ENCODE measurements at regions of chr14 and their contacts with region 1.

Region 1: DNA sequence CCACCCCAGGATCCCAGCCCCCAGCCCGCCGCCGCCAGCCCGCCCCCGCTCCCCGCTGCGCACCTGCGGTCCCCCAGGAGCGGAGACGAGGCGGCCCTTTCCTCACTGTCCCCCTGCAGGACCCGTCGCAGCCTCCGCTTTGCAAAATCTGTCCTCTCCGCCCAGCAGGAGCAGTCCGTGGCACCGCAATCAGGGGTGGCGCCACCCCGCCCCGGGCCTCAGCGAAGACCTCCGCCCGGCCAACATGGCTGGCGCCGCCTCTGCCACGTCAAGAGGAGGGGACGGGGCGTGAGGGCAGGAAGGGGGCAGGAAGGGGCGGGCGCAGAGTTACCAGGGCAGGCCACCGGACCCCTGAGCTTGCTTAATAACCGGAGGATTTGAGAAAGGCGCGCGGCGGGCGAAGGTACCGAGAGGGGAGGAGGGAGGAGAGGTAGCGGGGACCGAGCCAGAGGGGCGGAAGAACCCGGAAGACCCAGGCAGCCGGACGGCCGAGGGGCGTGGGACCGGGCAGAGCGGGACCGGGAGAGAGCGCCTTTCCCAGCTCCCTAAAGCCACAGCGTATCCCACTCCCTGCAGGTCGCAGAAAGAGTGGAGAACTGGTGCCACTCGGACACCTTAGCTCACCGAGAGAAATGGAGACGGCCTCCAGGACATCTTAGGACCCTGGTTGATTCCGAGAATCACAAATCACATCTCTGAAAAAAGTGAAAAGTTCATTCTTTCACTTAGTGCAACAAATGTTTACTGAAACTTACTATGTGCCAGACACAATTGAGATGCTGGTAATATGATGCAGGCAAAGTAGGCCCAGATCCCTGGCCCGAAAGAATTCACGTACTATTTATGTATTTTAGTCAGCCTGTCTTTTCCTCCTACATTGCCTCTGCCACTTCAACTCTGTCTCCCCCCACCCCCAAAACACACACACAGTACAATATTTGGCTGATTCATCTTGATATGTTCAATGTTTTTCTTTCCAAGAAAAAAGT is at the start of gene SEC23A:
- DNase-seq: peak; percentile 94 to 97
- H3K4me3 ChIP-seq: peak within 1 kb of the TSS; percentile 76
- H3K4me3 Mint-ChIP-seq: peak within 1 kb of the TSS; percentile 87
- H3K27ac Mint-ChIP-seq: peak within 1 kb of the TSS; percentile 93
- H3K4me1 ChIP-seq: peaks cover 24% of the 10 kb centered on the region
- H3K4me1 Mint-ChIP-seq: peaks cover 7% of the 10 kb centered on the region
- H3K27me3 ChIP-seq: no peaks in the 10 kb centered on the region
- H3K27me3 Mint-ChIP-seq: no peaks in the 10 kb centered on the region
- CTCF ChIP-seq: no peak
- total RNA-seq, gene SEC23A: 90.2 and 108 TPM in 2 replicates

Region 2: DNA sequence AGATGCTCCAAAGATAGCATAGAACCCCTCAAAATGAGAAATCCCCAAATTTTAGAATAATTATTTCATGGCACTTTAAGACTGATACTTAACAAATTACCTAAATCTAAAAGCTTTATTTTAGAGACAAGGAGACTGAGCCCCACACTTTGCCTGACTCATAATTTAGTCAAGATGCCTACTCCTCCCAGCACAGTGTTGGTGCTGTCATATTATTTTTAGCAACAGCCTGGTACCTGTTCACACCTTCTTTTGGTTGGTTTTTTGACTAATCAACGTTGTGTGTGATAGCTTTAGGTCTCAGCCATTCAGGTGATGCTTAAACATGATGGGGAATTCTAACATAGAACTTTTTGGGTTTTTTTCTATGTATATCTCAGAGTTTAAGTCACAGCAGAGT is 120.4 kb before region 1 on chr14:
- CTCF ChIA-PET with region 1: no interaction called
- POLR2A ChIA-PET with region 1: no interaction called
- intact Hi-C with region 1: no loop called
- DNase-seq: no peak
- H3K4me3 ChIP-seq: no peak overlapping the region
- H3K4me3 Mint-ChIP-seq: no peak overlapping the region
- H3K27ac Mint-ChIP-seq: no peak overlapping the region
- H3K4me1 ChIP-seq: no peaks in the 10 kb centered on the region
- H3K4me1 Mint-ChIP-seq: no peaks in the 10 kb centered on the region
- H3K27me3 ChIP-seq: no peaks in the 10 kb centered on the region
- H3K27me3 Mint-ChIP-seq: no peaks in the 10 kb centered on the region
- CTCF ChIP-seq: no peak

Region 3: DNA sequence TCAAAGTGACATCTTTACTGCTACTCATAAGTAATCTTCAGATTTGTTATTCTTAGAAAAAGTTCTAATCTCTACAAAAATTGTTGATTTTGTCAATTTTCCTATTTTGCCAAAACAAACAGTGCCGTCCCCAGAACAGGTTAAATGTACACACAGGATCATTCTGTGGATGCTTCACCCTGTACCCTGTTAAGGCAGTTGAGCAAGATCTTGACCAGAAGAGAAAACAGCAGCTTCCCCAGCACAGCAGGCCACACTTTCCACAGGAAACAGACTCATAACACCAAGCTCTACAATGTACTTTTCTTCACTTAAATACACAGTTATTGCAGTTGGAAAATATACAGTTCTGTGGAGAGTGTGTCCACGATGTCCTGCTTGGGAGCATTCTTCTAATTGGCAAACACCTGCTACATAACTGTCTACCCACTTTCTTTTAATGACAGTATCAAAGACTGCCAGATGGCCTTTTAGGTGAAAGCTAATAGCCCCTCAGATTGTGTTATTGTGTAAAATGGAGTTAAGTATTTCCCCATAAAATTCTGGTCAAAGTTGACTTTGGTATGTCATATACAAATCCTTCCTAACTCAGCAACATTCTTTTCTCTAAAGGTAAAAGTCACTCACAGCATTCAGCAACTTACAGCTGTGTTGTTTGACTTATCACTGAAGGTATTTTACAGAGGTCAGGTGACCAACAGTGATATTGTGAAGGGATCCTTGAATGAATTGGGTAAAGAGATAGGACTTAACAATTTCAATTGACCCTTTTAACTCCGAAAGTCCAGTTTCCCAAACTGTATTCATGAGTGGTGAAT is 77.2 kb before region 1 on chr14:
- CTCF ChIA-PET with region 1: interaction called, 4 read pairs
- POLR2A ChIA-PET with region 1: interaction called, 18 read pairs
- intact Hi-C with region 1: loop called (anchors 2 kb)
- DNase-seq: peak; percentile 53 to 59
- H3K4me3 ChIP-seq: no peak overlapping the region
- H3K4me3 Mint-ChIP-seq: peak overlapping the region; percentile 48
- H3K27ac Mint-ChIP-seq: peak overlapping the region; percentile 79
- H3K4me1 ChIP-seq: peaks cover 38% of the 10 kb centered on the region
- H3K4me1 Mint-ChIP-seq: peaks cover 51% of the 10 kb centered on the region
- H3K27me3 ChIP-seq: no peaks in the 10 kb centered on the region
- H3K27me3 Mint-ChIP-seq: no peaks in the 10 kb centered on the region
- CTCF ChIP-seq: no peak

Region 4: GRCh38 chr14:39083127-39083526 is 20.1 kb before region 1 on chr14:
- CTCF ChIA-PET with region 1: no interaction called
- POLR2A ChIA-PET with region 1: no interaction called
- intact Hi-C with region 1: no loop called
- DNase-seq: no peak
- H3K4me3 ChIP-seq: no peak overlapping the region
- H3K4me3 Mint-ChIP-seq: no peak overlapping the region
- H3K27ac Mint-ChIP-seq: no peak overlapping the region
- H3K4me1 ChIP-seq: no peaks in the 10 kb centered on the region
- H3K4me1 Mint-ChIP-seq: no peaks in the 10 kb centered on the region
- H3K27me3 ChIP-seq: no peaks in the 10 kb centered on the region
- H3K27me3 Mint-ChIP-seq: no peaks in the 10 kb centered on the region
- CTCF ChIP-seq: no peak

Region 5: GRCh38 chr14:39122330-39123138 is 19.3 kb after region 1 on chr14:
- CTCF ChIA-PET with region 1: no interaction called
- POLR2A ChIA-PET with region 1: interaction called, 11 read pairs
- intact Hi-C with region 1: no loop called
- DNase-seq: no peak
- H3K4me3 ChIP-seq: no peak overlapping the region
- H3K4me3 Mint-ChIP-seq: no peak overlapping the region
- H3K27ac Mint-ChIP-seq: no peak overlapping the region
- H3K4me1 ChIP-seq: no peaks in the 10 kb centered on the region
- H3K4me1 Mint-ChIP-seq: no peaks in the 10 kb centered on the region
- H3K27me3 ChIP-seq: no peaks in the 10 kb centered on the region
- H3K27me3 Mint-ChIP-seq: no peaks in the 10 kb centered on the region
- CTCF ChIP-seq: no peak

Region 6: DNA sequence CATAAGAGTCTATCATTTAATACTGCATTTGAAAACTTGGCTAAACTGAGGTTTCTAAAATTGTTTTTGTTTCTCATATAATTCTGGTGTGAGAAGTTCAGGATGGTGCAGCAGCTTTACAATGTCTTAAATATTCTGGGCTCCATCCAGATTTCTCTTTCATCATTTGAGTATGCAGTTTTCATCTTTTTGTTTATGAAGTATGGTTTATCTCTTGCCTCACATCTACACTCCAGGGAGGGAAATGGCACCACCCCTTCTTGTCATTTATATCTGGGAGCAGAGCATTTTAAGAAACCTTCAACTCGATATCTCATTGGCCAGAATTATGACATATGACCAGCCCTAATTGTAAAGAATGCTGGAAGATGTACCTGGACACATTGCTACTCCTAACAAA is 35.2 kb after region 1 on chr14:
- CTCF ChIA-PET with region 1: no interaction called
- POLR2A ChIA-PET with region 1: no interaction called
- intact Hi-C with region 1: no loop called
- DNase-seq: no peak
- H3K4me3 ChIP-seq: no peak overlapping the region
- H3K4me3 Mint-ChIP-seq: no peak overlapping the region
- H3K27ac Mint-ChIP-seq: no peak overlapping the region
- H3K4me1 ChIP-seq: no peaks in the 10 kb centered on the region
- H3K4me1 Mint-ChIP-seq: no peaks in the 10 kb centered on the region
- H3K27me3 ChIP-seq: no peaks in the 10 kb centered on the region
- H3K27me3 Mint-ChIP-seq: no peaks in the 10 kb centered on the region
- CTCF ChIP-seq: no peak

Region 7: DNA sequence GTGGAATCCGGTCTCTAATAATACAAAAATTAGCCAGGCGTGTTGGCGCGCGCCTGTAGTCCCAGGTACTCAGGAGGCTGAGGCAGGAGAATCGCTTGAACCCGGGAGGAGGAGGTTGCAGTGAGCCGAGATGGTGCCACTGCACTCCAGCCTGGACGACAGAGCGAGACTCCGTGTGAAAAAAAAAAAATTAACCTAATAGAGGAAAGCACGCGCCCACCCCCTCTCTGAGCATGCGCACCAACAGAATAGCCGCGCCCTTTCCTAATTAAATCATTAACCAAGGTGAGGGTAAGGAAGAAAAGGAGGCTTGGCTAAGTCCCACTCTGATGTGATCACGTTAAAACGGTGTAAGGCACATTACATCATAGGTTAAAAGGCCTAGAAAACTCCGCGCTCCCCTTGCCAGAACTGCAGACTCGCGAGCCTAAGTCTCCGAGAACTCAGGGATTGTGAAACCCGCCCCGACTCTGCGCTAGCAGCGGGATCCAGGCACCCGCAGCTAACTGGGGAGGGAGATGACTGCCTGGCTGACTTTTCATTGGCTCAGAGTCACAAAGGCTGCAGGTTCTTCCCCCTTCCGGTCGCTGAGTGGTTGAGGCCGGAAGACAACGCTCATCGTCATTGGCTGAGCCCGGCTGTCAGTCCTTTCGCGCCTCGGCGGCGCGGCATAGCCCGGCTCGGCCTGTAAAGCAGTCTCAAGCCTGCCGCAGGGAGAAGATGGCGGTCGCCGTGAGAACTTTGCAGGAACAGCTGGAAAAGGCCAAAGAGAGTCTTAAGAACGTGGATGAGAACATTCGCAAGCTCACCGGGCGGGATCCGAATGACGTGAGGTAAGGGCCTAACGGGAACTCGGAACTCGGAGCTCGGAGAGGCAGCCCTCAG is 71.5 kb after region 1 on chr14 and contains the start of gene PNN:
- CTCF ChIA-PET with region 1: interaction called, 9 read pairs
- POLR2A ChIA-PET with region 1: interaction called, 34 read pairs
- intact Hi-C with region 1: loop called (anchors 1 kb)
- DNase-seq: peak; percentile 98 to 99
- H3K4me3 ChIP-seq: peak within 1 kb of the TSS; percentile 58
- H3K4me3 Mint-ChIP-seq: peak within 1 kb of the TSS; percentile 92
- H3K27ac Mint-ChIP-seq: peak within 1 kb of the TSS; percentile 98
- H3K4me1 ChIP-seq: 0 out of 2 replicates have a peak, but pooled peaks cover 8% of the 10 kb centered on the region
- H3K4me1 Mint-ChIP-seq: peaks cover 7% of the 10 kb centered on the region
- H3K27me3 ChIP-seq: no peaks in the 10 kb centered on the region
- H3K27me3 Mint-ChIP-seq: no peaks in the 10 kb centered on the region
- CTCF ChIP-seq: no peak
- total RNA-seq, gene PNN: 98.5 and 100 TPM in 2 replicates

Region 8: DNA sequence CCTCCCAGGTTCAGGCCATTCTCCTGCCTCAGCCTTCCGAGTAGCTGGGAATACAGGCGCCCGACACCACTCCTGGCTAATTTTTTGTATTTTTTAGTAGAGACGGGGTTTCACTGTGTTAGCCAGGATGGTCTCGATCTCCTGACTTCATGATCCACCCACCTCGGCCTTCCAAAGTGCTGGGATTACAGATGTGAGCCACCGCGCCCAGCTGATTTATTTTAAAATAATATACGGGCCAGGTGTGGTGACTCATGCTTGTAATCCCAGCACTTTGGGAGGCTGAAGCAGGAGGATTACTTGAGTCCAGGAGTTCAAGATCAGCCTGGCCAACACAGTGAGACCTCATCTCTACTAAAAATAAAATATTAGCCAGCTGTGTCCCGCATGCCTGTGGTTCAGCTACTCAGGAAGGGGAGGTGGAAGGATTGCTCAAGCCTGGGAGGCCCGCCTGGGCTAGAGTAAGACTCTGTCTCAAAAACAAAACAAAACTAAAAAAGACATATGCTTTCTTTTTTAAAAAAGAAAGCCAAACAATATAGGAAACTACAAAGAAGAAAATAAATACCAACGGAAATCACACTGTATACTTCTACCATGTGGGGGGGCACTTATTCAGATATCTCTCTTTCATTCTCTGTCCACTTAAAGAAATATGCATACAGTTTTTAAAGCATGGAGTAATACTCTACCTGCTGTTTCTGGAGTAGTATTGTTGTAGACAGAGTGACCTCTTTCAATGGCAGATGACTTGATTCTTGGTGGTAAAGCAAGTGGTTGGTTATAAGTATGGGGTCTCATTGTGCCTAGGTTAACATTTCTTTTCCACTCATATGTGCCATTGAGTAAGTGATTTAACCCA is 129.5 kb after region 1 on chr14:
- CTCF ChIA-PET with region 1: no interaction called
- POLR2A ChIA-PET with region 1: interaction called, 4 read pairs
- intact Hi-C with region 1: loop called (anchors 1 kb)
- DNase-seq: peak in 1 of 2 experiments; percentile 38
- H3K4me3 ChIP-seq: no peak overlapping the region
- H3K4me3 Mint-ChIP-seq: no peak overlapping the region
- H3K27ac Mint-ChIP-seq: peak overlapping the region; percentile 64
- H3K4me1 ChIP-seq: peaks cover 38% of the 10 kb centered on the region
- H3K4me1 Mint-ChIP-seq: peaks cover 5% of the 10 kb centered on the region
- H3K27me3 ChIP-seq: no peaks in the 10 kb centered on the region
- H3K27me3 Mint-ChIP-seq: no peaks in the 10 kb centered on the region
- CTCF ChIP-seq: no peak

Region 9: GRCh38 chr14:39368261-39368959 is 265.1 kb after region 1 on chr14:
- CTCF ChIA-PET with region 1: interaction called, 3 read pairs
- POLR2A ChIA-PET with region 1: interaction called, 3 read pairs
- intact Hi-C with region 1: loop called (anchors 1 kb)
- DNase-seq: peak; percentile 69 to 80
- H3K4me3 ChIP-seq: no peak overlapping the region
- H3K4me3 Mint-ChIP-seq: no peak overlapping the region
- H3K27ac Mint-ChIP-seq: no peak overlapping the region
- H3K4me1 ChIP-seq: no peaks in the 10 kb centered on the region
- H3K4me1 Mint-ChIP-seq: peaks cover 11% of the 10 kb centered on the region
- H3K27me3 ChIP-seq: no peaks in the 10 kb centered on the region
- H3K27me3 Mint-ChIP-seq: no peaks in the 10 kb centered on the region
- CTCF ChIP-seq: peak; percentile 69 to 71

Region 10: DNA sequence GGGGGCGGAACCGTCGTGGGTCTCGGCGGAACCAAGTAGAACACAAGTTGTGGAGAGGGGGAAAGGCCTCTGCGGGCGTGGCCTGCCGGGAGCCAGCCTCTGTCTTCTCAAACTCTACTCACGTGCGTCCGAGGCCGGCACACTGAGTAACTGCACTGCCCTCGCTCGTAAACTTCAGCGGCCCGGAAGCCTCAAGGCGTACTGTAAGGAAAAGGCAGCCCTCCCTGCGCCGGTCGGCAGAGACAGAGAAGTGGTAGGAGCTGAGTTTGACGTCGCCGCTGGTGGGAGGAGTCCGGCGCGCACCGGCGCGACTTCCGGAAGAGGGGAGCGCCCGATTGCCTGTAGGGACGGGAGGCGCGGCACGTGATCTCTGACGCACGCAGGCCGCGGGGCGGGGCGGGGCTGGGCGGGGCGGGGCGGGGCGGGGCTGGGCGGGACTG is 328.9 kb after region 1 on chr14 and contains the start of gene FBXO33:
- CTCF ChIA-PET with region 1: interaction called, 7 read pairs
- POLR2A ChIA-PET with region 1: interaction called, 19 read pairs
- intact Hi-C with region 1: loop called (anchors 2 kb)
- DNase-seq: peak; percentile 96 to 97
- H3K4me3 ChIP-seq: peak within 1 kb of the TSS; percentile 93
- H3K4me3 Mint-ChIP-seq: peak within 1 kb of the TSS; percentile 93
- H3K27ac Mint-ChIP-seq: peak within 1 kb of the TSS; percentile 100
- H3K4me1 ChIP-seq: peaks cover 12% of the 10 kb centered on the region
- H3K4me1 Mint-ChIP-seq: peaks cover 19% of the 10 kb centered on the region
- H3K27me3 ChIP-seq: no peaks in the 10 kb centered on the region
- H3K27me3 Mint-ChIP-seq: no peaks in the 10 kb centered on the region
- CTCF ChIP-seq: no peak
- total RNA-seq, gene FBXO33: 6.0 and 6.5 TPM in 2 replicates